H1 (cell line): ENCODE measurements at regions of chr6 and their contacts with region 1.

Region 1: GRCh38 chr6:137799950-137800568 is 67.0 kb upstream of the TNFAIP3 start:
- DNase-seq: no peak
- H3K4me3 ChIP-seq: no peak overlapping the region
- H3K27ac ChIP-seq: no peak overlapping the region
- H3K4me1 ChIP-seq: no peaks in the 10 kb centered on the region; a peak in 1 of 7 replicates
- H3K27me3 ChIP-seq: no peaks in the 10 kb centered on the region
- CTCF ChIP-seq: peak in 2 of 3 experiments; percentile 60 to 65; a peak in 3 of 4 replicates
- EP300 ChIP-seq: no peak
- POLR2A ChIP-seq: no peak
- RAD21 ChIP-seq: peak; percentile 66 to 73

Region 2: GRCh38 chr6:137811121-137811915 is 11.3 kb after region 1 on chr6:
- CTCF ChIA-PET with region 1: interaction called, 30 read pairs
- POLR2A ChIA-PET with region 1: no interaction called
- DNase-seq: no peak
- H3K4me3 ChIP-seq: no peak overlapping the region
- H3K27ac ChIP-seq: no peak overlapping the region
- H3K4me1 ChIP-seq: peaks cover 0 to 3% (median 0%) of the 10 kb centered on the region in 4 experiments; a peak in 1 of 7 replicates
- H3K27me3 ChIP-seq: no peaks in the 10 kb centered on the region
- CTCF ChIP-seq: no peak
- EP300 ChIP-seq: no peak
- POLR2A ChIP-seq: no peak
- RAD21 ChIP-seq: no peak

Region 3: GRCh38 chr6:137866914-137867684 is 67.0 kb after region 1 on chr6 and contains the start of gene TNFAIP3:
- CTCF ChIA-PET with region 1: interaction called, 14 read pairs
- POLR2A ChIA-PET with region 1: interaction called, 3 read pairs
- DNase-seq: peak; percentile 50 to 88
- H3K4me3 ChIP-seq: peak within 1 kb of the TSS; percentile 46 to 88 (median 84)
- H3K27ac ChIP-seq: no peak within 1 kb of the TSS
- H3K4me1 ChIP-seq: peaks cover 5 to 17% (median 9%) of the 10 kb centered on the region in 4 experiments
- H3K27me3 ChIP-seq: peaks cover 0 to 16% (median 8%) of the 10 kb centered on the region in 4 experiments; a peak in 5 of 7 replicates
- CTCF ChIP-seq: peak; percentile 72 to 82 (median 73)
- EP300 ChIP-seq: peak in 1 of 2 experiments; percentile 52; a peak in 1 of 3 replicates
- POLR2A ChIP-seq: no peak; a peak in 1 of 3 replicates
- RAD21 ChIP-seq: peak; percentile 41 to 70
- total RNA-seq, gene TNFAIP3: 1.6 and 2.2 TPM in 2 replicates

Region 4: GRCh38 chr6:138044458-138044857 is 244.4 kb after region 1 on chr6:
- CTCF ChIA-PET with region 1: no interaction called
- POLR2A ChIA-PET with region 1: no interaction called
- DNase-seq: no peak
- H3K4me3 ChIP-seq: no peak overlapping the region
- H3K27ac ChIP-seq: no peak overlapping the region
- H3K4me1 ChIP-seq: no peaks in the 10 kb centered on the region
- H3K27me3 ChIP-seq: no peaks in the 10 kb centered on the region
- CTCF ChIP-seq: no peak
- EP300 ChIP-seq: no peak
- POLR2A ChIP-seq: no peak
- RAD21 ChIP-seq: no peak